ENCODE measurements at regions of chr1 and their contacts with region 1.

Region 1: GRCh38 chr1:40143891-40144575 is 17.2 kb upstream of the RLF start:
- DNase-seq: peak; percentile 55
- H3K4me3 Mint-ChIP-seq: no peak overlapping the region
- H3K27ac Mint-ChIP-seq: no peak overlapping the region
- H3K4me1 Mint-ChIP-seq: peaks cover 8% of the 10 kb centered on the region
- H3K27me3 Mint-ChIP-seq: peaks cover 26% of the 10 kb centered on the region

Region 2: DNA sequence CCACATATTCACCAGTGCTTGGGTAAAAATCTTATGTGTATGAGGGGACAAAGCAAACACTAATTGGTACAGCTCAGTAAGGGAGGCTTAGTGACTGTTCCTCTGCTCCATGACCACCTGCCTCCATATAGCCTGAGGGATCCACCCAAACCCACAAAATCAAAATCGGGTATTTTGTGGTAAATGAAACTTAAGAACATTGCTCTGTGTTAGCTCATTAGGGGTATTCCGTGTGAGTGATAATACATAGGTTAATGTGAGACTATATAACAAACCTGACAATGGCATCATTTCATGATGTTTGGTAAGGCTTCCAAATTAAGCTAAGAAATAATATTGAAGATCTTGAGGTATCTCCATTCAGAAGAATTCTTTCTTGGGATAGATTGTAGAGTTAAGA is 147.3 kb after region 1 on chr1:
- CTCF ChIA-PET with region 1: interaction called, 11 read pairs
- POLR2A ChIA-PET with region 1: no interaction called
- intact Hi-C with region 1: no loop called
- DNase-seq: no peak
- H3K4me3 Mint-ChIP-seq: no peak overlapping the region
- H3K27ac Mint-ChIP-seq: peak overlapping the region; percentile 7
- H3K4me1 Mint-ChIP-seq: peaks cover 7% of the 10 kb centered on the region
- H3K27me3 Mint-ChIP-seq: no peaks in the 10 kb centered on the region

Region 3: DNA sequence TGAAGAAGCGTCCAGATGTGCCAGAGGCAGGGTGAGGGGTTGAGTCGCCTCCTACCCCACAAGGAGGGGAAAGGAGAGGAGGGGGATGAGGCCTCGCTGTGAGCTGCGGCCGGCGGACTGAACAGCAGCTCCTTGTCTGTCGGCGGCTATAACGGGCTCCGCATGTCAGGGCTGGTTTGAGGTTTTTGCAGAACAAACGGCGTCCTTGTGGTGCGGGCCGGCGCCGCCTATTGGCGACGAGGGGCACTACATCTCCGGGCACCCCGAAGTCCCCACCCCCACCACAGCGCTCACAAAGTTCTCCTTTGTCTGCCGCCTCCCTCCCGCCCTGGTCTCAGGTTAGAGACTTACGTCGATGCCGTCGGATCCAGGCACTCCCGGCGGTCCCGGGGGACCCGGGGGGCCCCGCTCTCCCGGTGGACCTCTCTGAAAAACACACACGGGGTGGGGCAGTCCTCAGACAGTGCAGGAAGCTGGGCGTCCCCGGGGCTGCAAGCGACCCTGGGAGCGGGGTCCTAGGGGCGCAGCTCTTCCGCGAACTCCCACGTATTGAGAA is 171.3 kb after region 1 on chr1:
- CTCF ChIA-PET with region 1: interaction called, 28 read pairs
- POLR2A ChIA-PET with region 1: no interaction called
- intact Hi-C with region 1: no loop called
- DNase-seq: peak; percentile 91
- H3K4me3 Mint-ChIP-seq: peak overlapping the region; percentile 85
- H3K27ac Mint-ChIP-seq: no peak overlapping the region
- H3K4me1 Mint-ChIP-seq: peaks cover 47% of the 10 kb centered on the region
- H3K27me3 Mint-ChIP-seq: peaks cover 9% of the 10 kb centered on the region

Region 4: DNA sequence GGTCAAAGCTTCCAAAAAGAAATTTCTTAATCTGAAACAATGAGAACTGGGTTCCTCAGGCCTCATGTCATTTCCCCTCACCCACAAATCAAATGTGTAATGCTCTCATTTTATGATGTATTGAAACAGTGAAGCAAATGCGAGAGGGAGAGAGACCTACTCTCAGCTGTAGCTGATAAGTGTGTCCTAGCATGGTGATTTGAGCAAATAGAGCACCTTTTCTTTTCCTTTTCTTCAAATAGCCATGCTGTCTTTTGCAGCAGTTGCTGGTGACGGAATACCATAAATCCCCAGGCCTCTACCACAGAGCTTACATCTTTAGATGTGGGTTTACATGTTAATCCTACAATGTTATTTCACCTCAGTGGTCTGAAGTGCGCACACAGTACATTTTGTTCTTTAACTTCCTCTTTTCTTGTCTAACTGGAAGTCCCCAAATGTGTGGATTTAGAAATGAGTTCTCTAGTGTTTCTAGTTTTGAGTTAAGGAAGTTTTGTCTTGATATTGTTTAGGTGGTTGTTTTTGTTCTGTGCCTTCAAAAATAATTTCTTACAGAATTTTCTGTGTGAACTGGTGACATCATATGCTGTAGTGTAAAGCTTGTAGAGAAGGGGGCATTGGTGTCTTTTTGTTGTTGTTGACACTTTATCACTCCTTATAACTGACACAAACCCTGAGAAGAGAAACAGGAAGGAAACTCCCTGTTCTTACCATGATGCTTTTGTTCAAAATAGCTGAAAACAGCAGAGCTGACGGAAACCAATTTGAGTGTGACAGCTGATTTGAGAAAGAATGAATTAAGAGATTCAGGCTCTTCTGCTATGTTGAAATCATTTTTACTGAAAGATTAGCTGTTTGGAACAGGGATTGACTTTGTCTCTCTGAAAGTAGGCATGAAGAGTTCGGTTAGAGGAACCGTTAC is 241.7 kb after region 1 on chr1:
- CTCF ChIA-PET with region 1: interaction called, 16 read pairs
- POLR2A ChIA-PET with region 1: no interaction called
- intact Hi-C with region 1: no loop called
- DNase-seq: peak; percentile 77
- H3K4me3 Mint-ChIP-seq: peak overlapping the region; percentile 81
- H3K27ac Mint-ChIP-seq: peak overlapping the region; percentile 100
- H3K4me1 Mint-ChIP-seq: peaks cover 90% of the 10 kb centered on the region
- H3K27me3 Mint-ChIP-seq: no peaks in the 10 kb centered on the region

Region 5: GRCh38 chr1:40438391-40439015 is 294.5 kb after region 1 on chr1:
- CTCF ChIA-PET with region 1: interaction called, 23 read pairs
- POLR2A ChIA-PET with region 1: no interaction called
- intact Hi-C with region 1: no loop called
- DNase-seq: no peak
- H3K4me3 Mint-ChIP-seq: no peak overlapping the region
- H3K27ac Mint-ChIP-seq: no peak overlapping the region
- H3K4me1 Mint-ChIP-seq: no peaks in the 10 kb centered on the region
- H3K27me3 Mint-ChIP-seq: no peaks in the 10 kb centered on the region

Measured in activated CD4-positive, alpha-beta memory T cell treated with anti-CD3 and anti-CD28 coated beads for 36 hours (primary cell).